CD8-positive, alpha-beta T cell (primary cell): ENCODE measurements at regions of chr2 and their contacts with region 1.

Region 1: GRCh38 chr2:195848156-195848899 is 191.3 kb downstream of the SLC39A10 start:
- DNase-seq: peak in 2 of 9 experiments; percentile 16 to 27
- ATAC-seq: no peak
- H3K4me3 ChIP-seq: no peak overlapping the region
- H3K4me3 Mint-ChIP-seq: no peak overlapping the region
- H3K27ac ChIP-seq: no peak overlapping the region
- H3K27ac Mint-ChIP-seq: no peak overlapping the region
- H3K4me1 ChIP-seq: no peaks in the 10 kb centered on the region
- H3K4me1 Mint-ChIP-seq: no peaks in the 10 kb centered on the region
- H3K27me3 ChIP-seq: no peaks in the 10 kb centered on the region
- H3K27me3 Mint-ChIP-seq: peaks cover 2% of the 10 kb centered on the region
- CTCF ChIP-seq: no peak

Region 2: GRCh38 chr2:195636890-195637289 is 211.4 kb before region 1 on chr2:
- CTCF ChIA-PET with region 1: no interaction called
- POLR2A ChIA-PET with region 1: no interaction called
- intact Hi-C with region 1: no loop called
- DNase-seq: no peak
- ATAC-seq: no peak
- H3K4me3 ChIP-seq: no peak overlapping the region
- H3K4me3 Mint-ChIP-seq: no peak overlapping the region
- H3K27ac ChIP-seq: no peak overlapping the region
- H3K27ac Mint-ChIP-seq: no peak overlapping the region
- H3K4me1 ChIP-seq: no peaks in the 10 kb centered on the region
- H3K4me1 Mint-ChIP-seq: peaks cover 8% of the 10 kb centered on the region
- H3K27me3 ChIP-seq: no peaks in the 10 kb centered on the region
- H3K27me3 Mint-ChIP-seq: no peaks in the 10 kb centered on the region
- CTCF ChIP-seq: no peak

Region 3: GRCh38 chr2:195945061-195945460 is 96.7 kb after region 1 on chr2:
- CTCF ChIA-PET with region 1: no interaction called
- POLR2A ChIA-PET with region 1: no interaction called
- intact Hi-C with region 1: loop called in 1 of 2 experiments (anchors 5 kb)
- DNase-seq: no peak
- ATAC-seq: no peak
- H3K4me3 ChIP-seq: no peak overlapping the region
- H3K4me3 Mint-ChIP-seq: no peak overlapping the region
- H3K27ac ChIP-seq: no peak overlapping the region
- H3K27ac Mint-ChIP-seq: no peak overlapping the region
- H3K4me1 ChIP-seq: no peaks in the 10 kb centered on the region
- H3K4me1 Mint-ChIP-seq: no peaks in the 10 kb centered on the region
- H3K27me3 ChIP-seq: no peaks in the 10 kb centered on the region
- H3K27me3 Mint-ChIP-seq: no peaks in the 10 kb centered on the region
- CTCF ChIP-seq: no peak